Esophagus squamous epithelium (tissue), 5 donors: ENCODE measurements at regions of chr2 and their contacts with region 1.

Region 1: DNA sequence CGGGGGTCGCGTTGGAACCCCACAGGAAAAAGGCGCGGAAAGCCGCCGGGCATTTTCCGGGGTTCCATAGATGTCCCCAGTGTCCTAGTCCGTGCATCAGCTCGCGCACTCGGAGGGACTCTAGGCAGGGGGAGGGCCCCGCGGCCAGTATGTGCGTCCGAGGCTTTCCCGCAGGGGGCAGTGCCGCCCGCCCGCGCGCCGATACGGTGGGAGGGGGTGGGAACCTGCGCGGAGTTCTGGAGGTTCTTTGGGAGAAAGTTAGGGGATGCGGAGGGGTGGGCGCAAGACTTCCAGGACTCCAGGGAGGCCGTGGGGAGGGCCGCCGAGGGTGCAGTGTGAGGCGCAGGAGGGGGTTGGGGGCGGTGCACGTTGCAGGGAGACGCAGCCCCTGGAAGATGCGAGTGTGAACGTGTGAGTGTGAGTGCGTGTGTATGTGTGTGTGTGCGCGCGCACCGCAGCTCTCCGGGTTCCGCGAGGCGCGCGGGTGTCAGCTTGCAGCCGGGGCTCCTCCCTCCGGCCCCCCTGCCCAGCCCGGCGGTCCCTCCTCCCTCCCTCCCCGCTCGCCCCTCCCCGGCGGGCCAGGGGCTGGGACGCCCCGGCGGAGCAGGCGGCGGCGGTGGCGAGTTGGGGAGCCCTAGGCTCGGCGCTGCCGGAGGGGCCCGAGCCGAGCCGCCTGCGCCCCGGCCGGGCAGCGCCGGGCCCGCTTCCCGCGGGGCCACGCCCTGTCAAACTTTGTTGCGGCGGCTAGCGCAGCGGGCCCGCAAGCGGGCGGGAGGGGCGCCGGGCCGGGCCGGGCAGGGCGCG is at the start of gene TCF7L1:
- DNase-seq: no peak
- H3K4me3 ChIP-seq: peak within 1 kb of the TSS; percentile 43 to 88 (median 70)
- H3K27ac ChIP-seq: peak within 1 kb of the TSS; percentile 71 to 91 (median 85)
- H3K4me1 ChIP-seq: peaks cover 12 to 54% (median 32%) of the 10 kb centered on the region in 3 donors
- H3K27me3 ChIP-seq: peaks cover 0 to 26% (median 0%) of the 10 kb centered on the region in 4 donors
- CTCF ChIP-seq: peak; percentile 34 to 79 (median 76)
- POLR2A ChIP-seq: peak in 1 of 4 donors; percentile 13
- total RNA-seq, gene TCF7L1: 0.29 to 4.0 (median 1.3) TPM

Region 2: GRCh38 chr2:85266146-85267041 is 133.4 kb after region 1 on chr2:
- intact Hi-C with region 1: no loop called
- DNase-seq: no peak
- H3K4me3 ChIP-seq: no peak overlapping the region
- H3K27ac ChIP-seq: no peak overlapping the region
- H3K4me1 ChIP-seq: peaks cover 0 to 42% (median 0%) of the 10 kb centered on the region in 3 donors
- H3K27me3 ChIP-seq: no peaks in the 10 kb centered on the region
- CTCF ChIP-seq: peak; percentile 55 to 91 (median 82)
- POLR2A ChIP-seq: no peak

Region 3: GRCh38 chr2:85288244-85288725 is 155.2 kb after region 1 on chr2:
- intact Hi-C with region 1: loop called (anchors 5 kb)
- DNase-seq: no peak
- H3K4me3 ChIP-seq: peak overlapping the region in 2 of 4 donors; percentile 13 to 14
- H3K27ac ChIP-seq: peak overlapping the region; percentile 74 to 88 (median 83)
- H3K4me1 ChIP-seq: peaks cover 0 to 64% (median 20%) of the 10 kb centered on the region in 3 donors
- H3K27me3 ChIP-seq: no peaks in the 10 kb centered on the region
- CTCF ChIP-seq: no peak
- POLR2A ChIP-seq: no peak